Heart right ventricle (tissue), 16 donors: ENCODE measurements at regions of chr5 and their contacts with region 1.

Region 1: GRCh38 chr5:158875272-158875679 is 224.4 kb downstream of the EBF1 start:
- DNase-seq: no peak
- ATAC-seq: peak in 6 of 8 donors; percentile 20 to 65 (median 50)
- H3K4me3 ChIP-seq: peak overlapping the region in 6 of 10 donors; percentile 16 to 34 (median 28)
- H3K27ac ChIP-seq: peak overlapping the region; percentile 3 to 86 (median 67)
- H3K4me1 ChIP-seq: peaks cover 0 to 50% (median 37%) of the 10 kb centered on the region in 9 donors
- H3K27me3 ChIP-seq: no peaks in the 10 kb centered on the region
- CTCF ChIP-seq: no peak

Region 2: DNA sequence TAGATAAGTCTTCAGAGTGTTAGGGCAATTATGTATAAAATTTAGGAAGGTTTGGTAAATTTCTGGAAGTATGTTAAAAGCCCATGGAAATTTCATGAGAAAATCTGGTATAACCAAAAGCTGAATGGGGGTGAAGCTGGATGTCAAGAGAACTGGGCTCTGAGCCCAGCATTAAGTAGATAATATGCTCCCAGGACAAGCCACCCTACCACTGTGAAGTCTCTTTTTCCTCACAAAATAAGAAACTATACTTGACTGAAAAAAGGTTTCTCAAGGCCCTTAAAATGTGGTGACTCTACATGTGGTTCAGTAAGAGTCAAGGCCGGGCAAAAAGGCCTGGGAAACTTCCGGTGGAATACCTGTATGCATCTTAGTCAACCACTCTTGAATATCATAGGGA is 85.8 kb before region 1 on chr5:
- intact Hi-C with region 1: no loop called
- DNase-seq: no peak
- ATAC-seq: peak in 1 of 8 donors; percentile 48
- H3K4me3 ChIP-seq: no peak overlapping the region
- H3K27ac ChIP-seq: peak overlapping the region in 3 of 10 donors; percentile 9 to 35 (median 14)
- H3K4me1 ChIP-seq: peaks cover 0 to 32% (median 3%) of the 10 kb centered on the region in 9 donors
- H3K27me3 ChIP-seq: no peaks in the 10 kb centered on the region
- CTCF ChIP-seq: no peak

Region 3: DNA sequence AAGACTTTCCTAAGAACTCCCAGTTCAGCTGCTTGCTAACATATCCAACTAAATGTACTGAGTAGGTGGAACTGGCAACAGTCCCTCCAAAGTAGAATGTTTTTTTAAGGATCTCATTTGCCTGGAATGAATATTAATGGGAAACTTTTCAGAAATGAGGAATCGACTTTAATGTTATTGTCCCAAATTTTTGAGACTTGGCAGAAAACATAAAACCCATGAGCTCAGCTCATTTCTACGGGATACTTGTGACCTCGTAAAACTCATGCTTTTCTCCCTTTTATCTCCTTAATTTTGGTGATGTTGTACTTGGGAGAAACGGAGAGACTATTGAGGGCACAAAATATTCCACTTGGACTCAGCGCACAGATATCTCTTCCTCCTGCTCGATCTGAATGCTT is 72.3 kb before region 1 on chr5:
- intact Hi-C with region 1: loop called in 1 of 10 experiments (anchors 10 kb)
- DNase-seq: peak in 1 of 2 donors; percentile 13
- ATAC-seq: peak in 7 of 8 donors; percentile 45 to 72 (median 56)
- H3K4me3 ChIP-seq: no peak overlapping the region
- H3K27ac ChIP-seq: peak overlapping the region in 7 of 10 donors; percentile 11 to 54 (median 28)
- H3K4me1 ChIP-seq: peaks cover 0 to 74% (median 39%) of the 10 kb centered on the region in 9 donors
- H3K27me3 ChIP-seq: no peaks in the 10 kb centered on the region
- CTCF ChIP-seq: no peak

Region 4: DNA sequence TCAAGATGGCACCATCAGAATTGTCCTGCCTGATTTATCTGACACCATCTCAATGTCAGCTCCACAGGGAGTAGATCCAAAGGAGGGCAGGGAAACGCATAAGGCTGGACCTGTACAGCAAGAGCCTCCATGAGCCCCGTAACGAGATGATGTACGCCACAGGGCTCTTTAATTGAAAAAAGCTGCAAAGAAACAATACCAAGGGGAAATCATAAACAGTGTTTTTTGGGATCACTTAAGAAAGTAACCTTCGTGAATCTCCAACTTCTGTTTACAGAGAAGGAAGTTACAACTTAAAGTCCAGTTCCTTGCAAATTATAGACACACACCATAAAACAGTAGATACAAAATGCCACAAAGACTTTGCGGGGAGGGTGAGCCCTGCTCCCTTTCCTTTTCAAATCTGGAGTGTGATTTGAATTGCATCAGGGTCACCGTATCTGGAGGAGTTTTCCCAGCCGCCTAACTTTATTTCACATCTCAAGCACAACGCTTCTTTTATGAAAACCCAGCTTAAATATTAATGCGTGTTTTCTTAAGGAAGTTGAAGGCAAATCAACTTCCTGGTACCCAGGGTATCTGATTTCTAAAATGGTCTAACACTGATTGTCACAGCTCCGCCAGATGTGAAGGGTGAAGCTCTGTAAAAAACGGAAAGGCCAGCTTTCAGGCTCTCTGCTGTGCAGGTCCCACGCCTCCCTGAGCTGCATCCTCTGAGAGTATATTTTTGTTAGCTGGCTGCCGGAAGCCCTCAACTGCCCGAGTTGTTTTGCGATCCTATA is 135.6 kb after region 1 on chr5:
- intact Hi-C with region 1: loop called in 1 of 10 experiments (anchors 10 kb)
- DNase-seq: peak; percentile 29 to 57
- ATAC-seq: peak; percentile 74 to 87 (median 80)
- H3K4me3 ChIP-seq: peak overlapping the region in 7 of 10 donors; percentile 7 to 41 (median 32)
- H3K27ac ChIP-seq: peak overlapping the region in 9 of 10 donors; percentile 71 to 91 (median 82)
- H3K4me1 ChIP-seq: peaks cover 4 to 70% (median 30%) of the 10 kb centered on the region in 9 donors
- H3K27me3 ChIP-seq: peaks cover 0 to 3% (median 0%) of the 10 kb centered on the region in 7 donors
- CTCF ChIP-seq: no peak

Region 5: DNA sequence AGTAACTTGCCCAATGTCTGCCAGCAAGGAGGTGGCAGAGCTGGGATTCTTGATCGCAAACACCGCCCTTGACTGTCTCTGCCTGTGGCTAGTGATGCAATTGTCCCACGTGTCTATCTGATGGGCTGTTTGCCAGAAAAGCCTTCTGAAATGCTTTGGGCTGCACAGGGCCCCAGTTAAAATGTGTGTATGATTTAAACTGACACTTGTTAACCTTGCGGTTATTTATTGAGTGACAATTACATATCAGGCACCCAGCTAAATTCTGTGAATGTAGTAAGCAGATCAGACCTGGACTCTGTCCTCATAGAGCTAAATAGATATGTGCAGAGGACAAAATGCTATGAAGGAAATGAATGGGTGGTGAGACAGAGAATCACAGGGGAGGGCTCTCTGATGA is 466.6 kb after region 1 on chr5:
- intact Hi-C with region 1: no loop called
- DNase-seq: peak; percentile 24 to 63
- ATAC-seq: peak; percentile 63 to 92 (median 89)
- H3K4me3 ChIP-seq: no peak overlapping the region
- H3K27ac ChIP-seq: peak overlapping the region in 1 of 10 donors; percentile 4
- H3K4me1 ChIP-seq: peaks cover 0 to 39% (median 6%) of the 10 kb centered on the region in 9 donors
- H3K27me3 ChIP-seq: no peaks in the 10 kb centered on the region
- CTCF ChIP-seq: no peak